Mammary epithelial cell (primary cell): ENCODE measurements at regions of chr6 and their contacts with region 1.

Region 1: DNA sequence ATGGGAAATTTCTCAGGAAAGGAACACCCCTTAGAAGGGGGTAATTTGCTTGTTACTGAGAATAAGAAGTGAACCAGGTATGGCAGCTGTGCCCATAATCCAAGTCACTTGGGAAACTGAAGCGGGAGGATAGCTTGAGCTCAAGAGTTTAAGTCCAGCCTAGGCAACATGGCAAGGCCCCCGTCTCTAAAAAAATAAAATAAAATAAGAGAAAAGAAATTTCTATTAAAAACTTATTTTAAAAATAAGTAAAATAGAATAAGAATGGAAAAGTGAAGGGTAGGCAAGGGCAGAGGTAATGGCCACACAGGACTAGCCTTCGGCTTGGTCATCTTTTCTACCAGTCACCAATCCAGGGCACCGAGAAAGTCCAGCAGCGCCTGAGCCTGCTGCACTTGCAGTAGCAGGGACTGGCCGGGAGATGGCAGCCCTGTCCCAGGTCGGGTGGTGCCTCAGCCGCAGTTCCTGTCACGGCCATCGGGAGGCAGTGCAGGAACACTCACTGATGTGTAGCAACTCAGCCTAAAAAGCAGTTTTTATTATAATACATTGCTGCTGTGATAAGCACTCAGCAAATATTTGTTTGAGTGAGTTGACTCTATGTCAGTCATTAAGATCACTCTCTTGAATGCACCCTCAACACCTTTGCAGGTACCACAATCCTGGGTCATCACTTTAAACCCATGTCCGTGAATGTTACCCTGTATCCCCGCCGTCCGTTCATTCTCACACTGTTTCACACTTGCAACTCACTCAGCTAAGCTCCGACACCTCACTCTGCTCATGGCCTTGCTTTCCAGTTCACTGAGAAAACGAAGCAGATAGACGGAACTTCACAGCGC is 23.2 kb upstream of the GCM1 start:
- DNase-seq: peak; percentile 58
- H3K4me3 ChIP-seq: no peak overlapping the region
- H3K27ac ChIP-seq: no peak overlapping the region
- H3K4me1 ChIP-seq: peaks cover 15% of the 10 kb centered on the region
- H3K27me3 ChIP-seq: no peaks in the 10 kb centered on the region
- CTCF ChIP-seq: peak; percentile 100

Region 2: DNA sequence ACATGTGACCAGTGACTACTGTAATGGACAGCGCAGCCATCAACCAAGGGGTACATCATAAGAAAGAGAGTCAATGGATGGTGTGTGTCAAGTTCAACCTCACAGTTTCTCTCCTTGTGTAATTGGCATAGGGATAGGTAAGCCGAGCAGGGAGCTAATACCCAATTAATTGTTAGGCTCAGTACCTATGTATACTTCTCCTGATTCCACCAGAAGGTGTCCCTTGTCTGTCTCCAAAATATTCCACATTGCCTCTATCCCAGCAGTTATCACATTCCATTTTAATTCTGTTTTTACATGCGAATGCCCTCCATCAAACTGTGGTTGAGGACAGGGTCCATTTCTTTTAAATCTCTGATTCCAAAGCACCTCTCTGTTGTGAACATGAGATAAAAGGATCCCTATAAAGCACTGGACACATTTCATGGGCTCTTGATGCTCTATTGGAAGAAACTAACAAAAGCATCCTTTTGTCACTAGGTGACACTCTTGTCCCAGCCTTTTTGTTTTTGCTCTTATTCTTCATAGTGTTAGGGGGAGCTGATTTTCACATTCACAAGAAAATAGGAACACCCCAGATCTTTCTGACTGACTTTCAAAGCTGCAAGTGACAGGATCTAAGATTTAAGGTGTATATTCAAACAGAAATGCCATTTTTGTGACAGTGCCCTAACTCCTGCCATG is 67.7 kb before region 1 on chr6:
- CTCF ChIA-PET with region 1: interaction called, 10 read pairs
- dilution Hi-C with region 1: no loop called
- in situ Hi-C with region 1: no loop called
- intact Hi-C with region 1: loop called (anchors 1 kb)
- DNase-seq: peak; percentile 28
- H3K4me3 ChIP-seq: no peak overlapping the region
- H3K27ac ChIP-seq: no peak overlapping the region
- H3K4me1 ChIP-seq: peaks cover 7% of the 10 kb centered on the region
- H3K27me3 ChIP-seq: no peaks in the 10 kb centered on the region
- CTCF ChIP-seq: peak in 1 of 2 donors; percentile 44

Region 3: GRCh38 chr6:53348371-53349208 is 176.8 kb after region 1 on chr6 and contains the start of gene ELOVL5:
- CTCF ChIA-PET with region 1: no interaction called
- dilution Hi-C with region 1: no loop called
- in situ Hi-C with region 1: no loop called
- intact Hi-C with region 1: loop called (anchors 5 kb)
- DNase-seq: peak; percentile 96
- H3K4me3 ChIP-seq: peak within 1 kb of the TSS; percentile 81 to 92 (median 85)
- H3K27ac ChIP-seq: peak within 1 kb of the TSS; percentile 74
- H3K4me1 ChIP-seq: peaks cover 7% of the 10 kb centered on the region
- H3K27me3 ChIP-seq: no peaks in the 10 kb centered on the region
- CTCF ChIP-seq: no peak
- total RNA-seq, gene ELOVL5: 50.8 to 71.1 TPM

Region 4: DNA sequence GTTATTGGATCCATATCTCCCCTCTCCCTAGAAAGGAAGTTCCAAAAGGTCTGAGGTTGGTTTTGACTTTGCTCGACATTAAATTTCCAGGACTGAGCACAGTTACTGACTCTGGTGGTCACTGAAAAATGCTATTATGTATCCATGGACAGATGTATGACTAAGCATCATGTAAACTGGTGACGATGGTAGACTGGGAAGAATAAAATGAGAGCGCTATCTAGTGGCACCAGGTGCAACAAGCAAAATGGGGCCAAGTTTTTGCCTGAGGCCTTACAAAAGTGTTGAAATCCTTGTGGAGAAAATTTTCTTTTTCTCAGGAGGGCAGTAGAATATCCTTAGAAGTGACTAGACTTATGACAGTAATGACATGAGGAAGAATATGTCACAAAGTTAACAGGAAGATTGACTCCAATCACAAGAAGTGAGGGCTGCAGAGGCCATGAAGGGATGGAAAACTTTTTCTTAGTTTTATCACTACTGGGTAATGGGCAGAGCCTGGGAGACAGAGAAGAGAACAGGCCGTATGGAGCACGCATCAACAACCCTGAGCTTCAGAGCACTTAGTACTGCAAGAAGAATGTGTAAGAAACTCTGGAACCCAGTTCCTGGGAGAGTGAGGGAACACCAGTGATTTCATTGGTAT is 265.9 kb after region 1 on chr6:
- CTCF ChIA-PET with region 1: no interaction called
- dilution Hi-C with region 1: no loop called
- in situ Hi-C with region 1: loop called in 1 of 2 experiments (anchors 25 kb)
- intact Hi-C with region 1: loop called (anchors 1 kb)
- DNase-seq: peak; percentile 75
- H3K4me3 ChIP-seq: no peak overlapping the region
- H3K27ac ChIP-seq: no peak overlapping the region
- H3K4me1 ChIP-seq: peaks cover 2% of the 10 kb centered on the region
- H3K27me3 ChIP-seq: no peaks in the 10 kb centered on the region
- CTCF ChIP-seq: peak; percentile 67 to 74

Region 5: GRCh38 chr6:53484476-53485280 is 312.9 kb after region 1 on chr6:
- CTCF ChIA-PET with region 1: no interaction called
- dilution Hi-C with region 1: loop called (anchors 10 kb)
- in situ Hi-C with region 1: loop called (anchors 5 to 10 kb)
- intact Hi-C with region 1: loop called (anchors 1 kb)
- DNase-seq: peak; percentile 43
- H3K4me3 ChIP-seq: no peak overlapping the region
- H3K27ac ChIP-seq: no peak overlapping the region
- H3K4me1 ChIP-seq: no peaks in the 10 kb centered on the region
- H3K27me3 ChIP-seq: no peaks in the 10 kb centered on the region
- CTCF ChIP-seq: peak; percentile 93 to 96

Region 6: DNA sequence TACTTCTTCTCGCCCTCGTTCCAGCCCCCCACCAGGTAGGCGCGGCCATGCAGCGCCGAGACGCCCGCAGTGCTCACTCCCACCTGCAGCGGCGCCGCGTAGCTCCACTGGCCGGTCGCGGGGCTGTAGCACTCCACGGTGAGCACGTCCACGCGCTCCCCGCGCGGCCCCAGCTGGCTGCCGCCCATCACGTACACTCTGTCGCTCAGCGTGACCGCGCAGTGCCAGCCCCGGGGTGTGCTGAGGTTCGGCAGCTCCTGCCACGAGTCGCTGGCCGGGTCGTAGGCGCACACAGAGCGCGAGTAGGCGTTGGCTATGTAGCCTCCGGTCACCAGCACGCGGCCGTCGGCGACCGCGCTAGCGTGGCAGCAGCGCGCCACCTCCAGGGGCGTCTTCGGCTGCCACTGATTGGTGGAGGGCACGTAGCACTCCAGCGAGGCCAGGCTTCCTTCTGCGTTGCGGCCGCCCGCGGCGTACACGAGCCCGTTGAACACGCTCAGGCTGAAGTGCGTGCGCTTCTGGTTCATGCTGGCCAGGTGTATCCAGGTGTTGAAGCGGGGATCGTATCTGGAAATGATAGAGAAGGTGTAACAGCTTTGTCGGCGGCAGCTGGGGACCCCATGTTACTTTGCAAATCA is 480.1 kb after region 1 on chr6:
- CTCF ChIA-PET with region 1: no interaction called
- dilution Hi-C with region 1: no loop called
- in situ Hi-C with region 1: no loop called
- intact Hi-C with region 1: loop called (anchors 5 kb)
- DNase-seq: peak; percentile 85
- H3K4me3 ChIP-seq: peak overlapping the region; percentile 45 to 68 (median 65)
- H3K27ac ChIP-seq: peak overlapping the region; percentile 83
- H3K4me1 ChIP-seq: peaks cover 26% of the 10 kb centered on the region
- H3K27me3 ChIP-seq: no peaks in the 10 kb centered on the region
- CTCF ChIP-seq: peak in 1 of 2 donors; percentile 42

Region 7: DNA sequence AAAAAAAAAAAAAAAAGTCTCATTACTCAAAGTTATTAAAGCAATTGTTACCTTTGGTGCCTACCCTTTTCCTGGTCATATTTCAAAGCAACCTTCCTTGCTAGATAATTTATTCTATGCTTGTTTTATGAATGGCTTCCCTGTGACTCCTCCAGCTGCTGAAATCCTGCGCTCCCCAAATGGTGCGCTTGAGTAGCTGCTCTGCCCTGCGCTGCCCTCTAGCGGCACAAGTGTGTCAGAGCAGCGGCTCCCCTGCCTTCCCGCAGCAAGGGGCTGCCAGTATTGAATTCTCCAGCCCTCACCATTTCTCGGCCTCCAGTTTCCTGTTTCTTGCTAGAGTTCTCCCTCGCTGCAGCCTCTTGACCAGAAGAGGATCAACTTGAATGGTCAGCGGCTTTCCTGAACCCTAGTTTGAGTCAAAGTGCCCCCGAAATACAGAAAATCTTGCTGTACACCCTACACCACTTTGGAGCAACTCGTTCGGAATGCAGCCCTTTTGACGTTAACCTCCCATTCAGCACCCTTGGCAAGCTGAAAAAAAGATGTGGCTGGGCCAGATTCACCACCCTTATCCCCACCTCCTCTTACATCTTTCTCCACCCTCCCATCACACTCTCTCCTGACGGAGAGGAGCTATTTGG is 554.1 kb after region 1 on chr6:
- CTCF ChIA-PET with region 1: interaction called, 3 read pairs
- dilution Hi-C with region 1: no loop called
- in situ Hi-C with region 1: no loop called
- intact Hi-C with region 1: loop called (anchors 5 kb)
- DNase-seq: peak; percentile 48
- H3K4me3 ChIP-seq: no peak overlapping the region
- H3K27ac ChIP-seq: no peak overlapping the region
- H3K4me1 ChIP-seq: peaks cover 3% of the 10 kb centered on the region
- H3K27me3 ChIP-seq: no peaks in the 10 kb centered on the region
- CTCF ChIP-seq: peak; percentile 98 to 99